Heart left ventricle (tissue), 16 donors: ENCODE measurements at regions of chrX and their contacts with region 1.

Region 1: DNA sequence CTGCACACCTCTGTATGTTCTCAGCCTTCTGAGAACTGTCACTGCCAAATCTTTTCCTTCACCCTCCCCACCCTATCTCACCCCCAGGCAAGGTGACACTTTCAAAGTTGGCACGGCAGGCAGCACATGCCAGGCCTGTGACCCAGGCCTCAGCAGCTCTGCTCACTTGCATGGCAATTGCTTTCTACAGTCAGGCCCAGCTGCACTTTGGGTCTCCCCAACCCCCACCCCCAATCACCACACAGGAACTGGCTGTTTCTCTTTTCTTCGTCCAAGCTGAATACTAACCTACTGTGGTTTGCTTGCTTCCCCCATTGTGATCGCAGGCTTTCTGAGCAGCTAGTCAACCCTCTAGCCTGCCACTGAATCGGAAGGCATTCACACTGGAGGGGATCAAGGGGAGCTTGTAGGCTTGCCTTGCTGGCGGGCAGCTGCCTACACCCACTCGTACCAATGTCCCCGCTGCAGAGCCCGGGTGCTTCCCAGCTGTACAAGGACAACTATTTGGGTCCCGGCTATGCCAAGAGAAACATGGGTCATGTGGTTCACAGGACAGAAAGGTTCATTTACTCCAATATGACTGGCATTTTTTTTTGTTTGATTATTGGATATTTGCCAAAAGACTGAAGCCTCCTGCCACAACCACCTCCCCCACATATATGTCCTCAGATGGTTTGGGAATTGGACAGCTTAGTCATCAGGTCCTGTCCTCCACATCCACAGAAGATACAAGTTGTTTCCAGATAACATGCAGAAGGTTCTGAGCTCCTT is 28.1 kb downstream of the SLC25A43 start:
- DNase-seq: peak in 4 of 5 donors; percentile 26 to 53 (median 42)
- ATAC-seq: peak; percentile 81 to 92 (median 88)
- H3K4me3 ChIP-seq: no peak overlapping the region
- H3K27ac ChIP-seq: peak overlapping the region in 8 of 12 donors; percentile 25 to 59 (median 42)
- H3K4me1 ChIP-seq: peaks cover 0 to 11% (median 0%) of the 10 kb centered on the region in 12 donors
- H3K27me3 ChIP-seq: no peaks in the 10 kb centered on the region
- CTCF ChIP-seq: no peak
- POLR2A ChIP-seq: no peak

Region 2: GRCh38 chrX:119363391-119363790 is 63.8 kb before region 1 on chrX:
- intact Hi-C with region 1: no loop called
- DNase-seq: no peak
- ATAC-seq: no peak
- H3K4me3 ChIP-seq: no peak overlapping the region
- H3K27ac ChIP-seq: no peak overlapping the region
- H3K4me1 ChIP-seq: no peaks in the 10 kb centered on the region
- H3K27me3 ChIP-seq: no peaks in the 10 kb centered on the region
- CTCF ChIP-seq: no peak
- POLR2A ChIP-seq: no peak

Region 3: GRCh38 chrX:119468930-119469635 is 41.9 kb after region 1 on chrX:
- intact Hi-C with region 1: loop called in 1 of 10 experiments (anchors 5 kb)
- DNase-seq: peak; percentile 87 to 93 (median 89)
- ATAC-seq: peak; percentile 77 to 89 (median 87)
- H3K4me3 ChIP-seq: peak overlapping the region; percentile 73 to 100 (median 85)
- H3K27ac ChIP-seq: peak overlapping the region; percentile 91 to 99 (median 97)
- H3K4me1 ChIP-seq: peaks cover 0 to 16% (median 0%) of the 10 kb centered on the region in 12 donors
- H3K27me3 ChIP-seq: no peaks in the 10 kb centered on the region
- CTCF ChIP-seq: peak; percentile 56 to 88 (median 74)
- POLR2A ChIP-seq: peak in 1 of 2 donors; percentile 52